ENCODE measurements at regions of chr19 and their contacts with region 1.

Region 1: DNA sequence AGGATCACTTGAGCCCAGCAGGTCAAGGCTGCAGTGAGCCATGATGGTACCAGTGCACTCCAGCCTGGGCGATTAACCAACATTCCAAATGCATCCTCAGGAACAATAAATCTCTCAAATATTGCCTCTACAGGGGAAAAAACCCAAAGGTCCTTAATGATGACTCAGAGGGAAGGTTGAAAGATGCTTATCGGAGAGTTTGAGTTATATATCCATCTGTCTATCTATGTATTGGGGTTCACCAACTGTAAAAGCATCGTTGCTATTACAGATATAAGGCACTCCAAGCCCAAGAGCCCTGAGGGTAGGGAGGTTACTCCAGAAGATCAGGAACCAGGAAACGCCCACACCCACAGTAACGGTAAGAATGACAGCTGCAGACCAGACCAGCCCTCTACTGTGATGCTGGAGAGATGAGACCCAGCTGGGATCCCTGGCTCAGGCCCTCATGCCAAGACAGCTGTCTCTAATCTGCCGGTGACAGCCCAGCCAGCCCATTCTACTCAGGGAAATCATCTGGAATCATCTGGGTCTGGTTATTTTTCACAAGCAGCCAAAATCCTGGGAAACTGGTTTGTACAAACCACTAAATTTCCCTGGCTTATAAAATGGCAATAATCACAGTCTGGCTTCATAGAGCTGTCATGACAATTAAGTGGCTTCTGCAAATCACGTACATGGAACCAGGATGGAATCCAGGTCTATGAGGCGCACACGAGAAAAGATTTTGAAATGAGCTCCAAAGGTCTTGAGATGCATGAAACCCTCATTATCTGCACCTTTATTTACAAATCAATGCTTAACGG is 23.8 kb downstream of the TEX101 start:
- DNase-seq: peak; percentile 98
- H3K4me3 ChIP-seq: no peak overlapping the region
- H3K27me3 ChIP-seq: peaks cover 2% of the 10 kb centered on the region
- CTCF ChIP-seq: no peak

Region 2: GRCh38 chr19:43316592-43317319 is 121.7 kb before region 1 on chr19:
- CTCF ChIA-PET with region 1: no interaction called
- POLR2A ChIA-PET with region 1: no interaction called
- DNase-seq: no peak
- H3K4me3 ChIP-seq: no peak overlapping the region
- H3K27me3 ChIP-seq: no peaks in the 10 kb centered on the region
- CTCF ChIP-seq: peak; percentile 58

Region 3: GRCh38 chr19:43414554-43414953 is 23.9 kb before region 1 on chr19 and contains the start of gene TEX101:
- CTCF ChIA-PET with region 1: no interaction called
- POLR2A ChIA-PET with region 1: no interaction called
- DNase-seq: no peak
- H3K4me3 ChIP-seq: no peak within 1 kb of the TSS
- H3K27me3 ChIP-seq: peaks cover 12% of the 10 kb centered on the region
- CTCF ChIP-seq: no peak
- polyA plus RNA-seq, gene TEX101: not detected in 2 replicates

Region 4: GRCh38 chr19:43425567-43426392 is 12.7 kb before region 1 on chr19:
- CTCF ChIA-PET with region 1: interaction called, 12 read pairs
- POLR2A ChIA-PET with region 1: no interaction called
- DNase-seq: no peak
- H3K4me3 ChIP-seq: no peak overlapping the region
- H3K27me3 ChIP-seq: peaks cover 2% of the 10 kb centered on the region; the same call in 1 of the 2 replicates
- CTCF ChIP-seq: peak; percentile 70

Measured in BJ (cell line).